ENCODE measurements at regions of chr22 and their contacts with region 1.

Region 1: DNA sequence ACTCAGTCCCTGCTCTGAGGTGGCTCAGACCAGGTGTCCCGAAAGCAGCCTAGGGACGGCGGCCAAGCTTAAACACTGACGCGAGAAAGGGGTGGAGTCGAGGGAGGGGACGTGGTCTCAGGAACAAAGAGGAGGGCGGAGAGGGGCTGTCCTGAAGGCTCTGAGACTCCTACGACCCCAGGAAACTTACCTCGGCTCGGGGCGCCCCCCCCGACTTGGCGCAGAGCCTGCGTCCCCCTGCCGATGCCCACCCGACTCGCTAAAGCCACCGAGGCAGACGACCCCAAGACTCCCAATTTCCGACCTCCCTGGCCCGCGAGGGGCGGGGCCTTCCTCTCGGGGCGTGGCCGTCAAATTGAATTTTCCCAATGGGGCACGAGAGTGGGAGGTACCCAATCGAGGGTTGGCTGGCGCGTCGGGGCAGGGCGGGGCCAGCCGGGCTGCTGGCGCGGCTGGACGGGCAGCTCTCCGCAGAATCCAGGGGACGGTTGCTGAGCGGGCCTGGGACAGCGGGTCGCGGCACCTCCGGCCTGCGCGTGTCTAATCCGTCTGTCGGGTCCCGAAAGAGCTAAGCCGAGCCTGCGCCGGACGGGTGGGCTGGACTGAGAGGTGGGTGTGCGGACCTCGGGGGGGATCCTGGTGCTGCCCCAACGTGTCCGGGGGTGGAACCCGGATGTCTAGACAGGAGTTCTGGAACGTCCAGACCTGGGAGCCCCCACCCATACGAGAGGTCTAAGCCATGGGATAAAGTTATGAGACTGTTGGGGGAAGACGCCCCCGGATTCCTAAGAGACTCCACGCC is at the start of gene SMTN:
- DNase-seq: peak; percentile 97
- H3K4me3 ChIP-seq: peak within 1 kb of the TSS; percentile 69 to 95 (median 82)
- H3K27ac ChIP-seq: peak within 1 kb of the TSS; percentile 64 to 96 (median 92)
- H3K4me1 ChIP-seq: peaks cover 12 to 69% (median 56%) of the 10 kb centered on the region in 6 donors
- H3K27me3 ChIP-seq: no peaks in the 10 kb centered on the region
- CTCF ChIP-seq: peak in 2 of 11 experiments; percentile 7 to 12
- POLR2A ChIP-seq: peak; percentile 47 to 88 (median 75)
- total RNA-seq, gene SMTN: 124 to 230 (median 159) TPM

Region 2: DNA sequence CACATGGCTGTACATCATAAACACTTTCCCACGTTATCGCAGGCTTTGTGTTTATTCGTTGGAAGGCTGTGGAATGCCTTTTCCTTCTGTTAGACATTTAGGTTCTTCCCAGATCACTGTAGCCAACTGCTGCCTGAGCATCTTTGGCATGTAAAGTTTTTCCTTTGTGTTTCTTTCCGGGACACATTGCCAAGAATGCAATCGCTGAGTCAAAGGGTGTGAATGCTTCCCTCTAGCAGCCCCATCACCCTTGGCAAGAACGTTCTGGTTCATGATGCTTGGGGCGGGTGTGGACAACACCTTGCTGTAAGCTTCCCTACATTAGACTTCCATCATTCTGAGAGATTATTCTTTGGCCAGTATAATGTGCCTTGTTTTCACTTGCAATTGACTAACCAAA is 250.1 kb before region 1 on chr22:
- intact Hi-C with region 1: no loop called
- DNase-seq: no peak
- H3K4me3 ChIP-seq: no peak overlapping the region
- H3K27ac ChIP-seq: no peak overlapping the region
- H3K4me1 ChIP-seq: no peaks in the 10 kb centered on the region
- H3K27me3 ChIP-seq: no peaks in the 10 kb centered on the region
- CTCF ChIP-seq: no peak
- POLR2A ChIP-seq: no peak

Region 3: GRCh38 chr22:30968924-30969539 is 112.0 kb before region 1 on chr22 and contains the start of gene TUG1:
- intact Hi-C with region 1: loop called (anchors 5 kb)
- DNase-seq: peak; percentile 98
- H3K4me3 ChIP-seq: peak within 1 kb of the TSS; percentile 74 to 91 (median 84)
- H3K27ac ChIP-seq: peak within 1 kb of the TSS; percentile 93 to 98 (median 98)
- H3K4me1 ChIP-seq: peaks cover 18 to 76% (median 45%) of the 10 kb centered on the region in 6 donors
- H3K27me3 ChIP-seq: no peaks in the 10 kb centered on the region
- CTCF ChIP-seq: peak in 3 of 11 experiments; percentile 14 to 28 (median 15)
- POLR2A ChIP-seq: peak in 2 of 3 donors; percentile 50 to 87
- total RNA-seq, gene TUG1: 62.1 to 127 (median 91.0) TPM

Region 4: GRCh38 chr22:31139866-31140716 is 59.0 kb after region 1 on chr22 and contains the start of gene PLA2G3:
- intact Hi-C with region 1: no loop called
- DNase-seq: no peak
- H3K4me3 ChIP-seq: no peak within 1 kb of the TSS
- H3K27ac ChIP-seq: no peak within 1 kb of the TSS
- H3K4me1 ChIP-seq: no peaks in the 10 kb centered on the region
- H3K27me3 ChIP-seq: peaks cover 0 to 31% (median 0%) of the 10 kb centered on the region in 7 donors
- CTCF ChIP-seq: no peak
- POLR2A ChIP-seq: no peak
- total RNA-seq, gene PLA2G3: not detected

Measured in spleen (tissue), 13 donors.